Calu3 (cell line): ENCODE measurements at regions of chr14 and their contacts with region 1.

Region 1: DNA sequence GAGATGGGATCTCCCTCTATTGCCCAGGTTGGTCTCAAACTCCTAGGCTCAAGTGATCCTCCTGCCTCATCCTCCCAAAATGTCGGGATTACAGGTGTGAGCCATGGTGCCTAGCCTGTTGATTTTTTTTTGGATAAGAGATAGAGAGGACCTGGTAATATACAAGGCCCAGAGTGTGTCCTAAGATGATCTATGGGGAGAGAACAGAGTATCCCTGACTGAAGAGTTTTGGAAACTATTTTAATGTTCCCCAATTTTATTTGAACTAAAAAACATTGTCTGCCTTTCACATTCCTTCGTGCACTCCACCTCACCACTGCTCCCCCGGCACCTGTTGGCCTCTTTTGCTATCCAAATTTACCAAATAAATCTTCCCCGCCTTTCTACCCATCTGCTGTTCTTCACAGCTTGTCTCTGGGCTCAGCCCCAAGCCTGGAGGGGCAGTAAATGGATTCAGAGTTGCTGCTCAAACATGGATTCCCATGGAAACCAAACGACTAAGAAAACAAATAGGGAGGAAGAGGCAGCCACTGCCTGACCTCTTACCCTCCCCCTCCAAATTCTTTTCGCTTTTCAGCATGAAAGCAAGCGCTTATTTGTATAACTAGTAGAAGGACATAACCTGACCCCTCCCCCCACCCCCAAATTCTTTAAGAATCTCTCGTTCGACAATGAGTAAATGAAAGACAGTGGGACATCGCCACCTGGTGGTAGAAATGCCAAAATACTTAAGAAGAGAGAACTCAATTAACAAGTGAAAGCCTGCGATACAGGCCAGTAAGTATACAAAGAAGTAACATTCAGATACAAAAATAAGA is 22.6 kb downstream of the OR10G3 start:
- DNase-seq: peak; percentile 74
- H3K4me3 Mint-ChIP-seq: no peak overlapping the region
- H3K27ac Mint-ChIP-seq: peak overlapping the region; percentile 14
- H3K4me1 Mint-ChIP-seq: peaks cover 8% of the 10 kb centered on the region
- H3K27me3 Mint-ChIP-seq: no peaks in the 10 kb centered on the region
- CTCF ChIP-seq: peak; percentile 54

Region 2: DNA sequence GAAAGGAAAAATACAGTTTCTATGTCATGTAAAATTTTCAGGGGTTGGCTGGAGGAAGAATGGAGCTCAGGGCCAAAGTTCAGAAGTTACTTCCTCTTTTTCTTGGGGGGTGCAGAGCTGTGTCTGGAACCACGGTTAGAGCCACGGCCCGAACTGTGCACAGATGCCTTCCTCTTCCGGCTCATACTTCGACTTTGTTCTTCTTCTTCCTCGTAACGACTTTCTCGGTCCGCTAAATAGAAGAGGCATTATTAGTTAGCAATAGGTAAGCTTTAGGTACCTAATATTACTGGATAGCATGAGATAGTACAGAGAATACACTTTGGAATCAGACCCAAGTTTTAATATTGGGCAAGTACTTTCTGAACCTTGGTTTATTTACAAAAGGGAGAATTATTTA is 204.7 kb before region 1 on chr14:
- CTCF ChIA-PET with region 1: no interaction called
- intact Hi-C with region 1: no loop called
- DNase-seq: no peak
- H3K4me3 Mint-ChIP-seq: no peak overlapping the region
- H3K27ac Mint-ChIP-seq: no peak overlapping the region
- H3K4me1 Mint-ChIP-seq: no peaks in the 10 kb centered on the region
- H3K27me3 Mint-ChIP-seq: no peaks in the 10 kb centered on the region
- CTCF ChIP-seq: no peak

Region 3: DNA sequence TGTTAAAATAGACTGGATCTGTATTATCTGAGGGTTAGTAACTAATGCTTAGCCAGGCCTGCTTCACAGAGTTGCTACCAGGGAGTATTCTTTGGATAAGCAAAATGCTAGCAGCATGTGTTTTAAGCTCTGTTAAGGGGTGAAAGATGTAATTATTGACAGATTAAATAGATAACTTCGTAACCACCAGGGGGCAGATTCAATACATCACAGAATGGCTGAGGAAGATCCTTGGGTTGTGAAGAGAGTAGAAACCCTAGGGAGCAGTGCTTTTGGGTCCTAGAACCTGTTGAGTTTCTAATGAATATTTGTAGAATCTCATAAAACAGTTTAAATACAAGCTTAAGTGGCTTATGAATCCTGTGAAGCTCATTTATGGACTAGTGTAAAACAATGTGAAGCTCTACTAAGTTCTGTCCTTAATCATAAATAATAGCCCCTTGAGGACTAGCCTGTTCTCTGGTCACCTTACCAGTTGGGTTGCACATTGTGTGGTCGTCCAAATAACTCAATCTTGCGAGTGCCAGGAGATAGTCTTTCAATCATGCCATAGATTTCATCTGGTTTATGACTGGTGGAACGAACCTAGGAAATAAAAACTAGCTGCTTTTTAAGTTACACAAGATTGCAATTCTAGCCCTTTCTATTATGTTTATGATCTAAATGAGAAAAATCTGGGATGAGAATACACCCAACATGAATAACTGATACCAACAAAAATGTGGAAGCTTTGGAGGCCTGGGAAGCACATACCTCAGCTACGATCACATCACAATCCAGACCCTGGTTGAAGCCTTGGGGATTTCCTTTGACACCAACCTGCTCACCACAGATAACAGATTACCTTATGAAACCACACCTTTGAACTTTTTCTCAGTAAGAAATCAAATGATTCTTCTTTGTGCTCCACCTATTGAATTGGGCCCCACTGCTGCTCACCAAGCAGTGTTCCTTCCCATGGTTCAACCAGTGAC is 58.5 kb before region 1 on chr14:
- CTCF ChIA-PET with region 1: interaction called, 11 read pairs
- intact Hi-C with region 1: loop called (anchors 1 kb)
- DNase-seq: peak; percentile 40
- H3K4me3 Mint-ChIP-seq: no peak overlapping the region
- H3K27ac Mint-ChIP-seq: no peak overlapping the region
- H3K4me1 Mint-ChIP-seq: no peaks in the 10 kb centered on the region
- H3K27me3 Mint-ChIP-seq: no peaks in the 10 kb centered on the region
- CTCF ChIP-seq: peak; percentile 43

Region 4: DNA sequence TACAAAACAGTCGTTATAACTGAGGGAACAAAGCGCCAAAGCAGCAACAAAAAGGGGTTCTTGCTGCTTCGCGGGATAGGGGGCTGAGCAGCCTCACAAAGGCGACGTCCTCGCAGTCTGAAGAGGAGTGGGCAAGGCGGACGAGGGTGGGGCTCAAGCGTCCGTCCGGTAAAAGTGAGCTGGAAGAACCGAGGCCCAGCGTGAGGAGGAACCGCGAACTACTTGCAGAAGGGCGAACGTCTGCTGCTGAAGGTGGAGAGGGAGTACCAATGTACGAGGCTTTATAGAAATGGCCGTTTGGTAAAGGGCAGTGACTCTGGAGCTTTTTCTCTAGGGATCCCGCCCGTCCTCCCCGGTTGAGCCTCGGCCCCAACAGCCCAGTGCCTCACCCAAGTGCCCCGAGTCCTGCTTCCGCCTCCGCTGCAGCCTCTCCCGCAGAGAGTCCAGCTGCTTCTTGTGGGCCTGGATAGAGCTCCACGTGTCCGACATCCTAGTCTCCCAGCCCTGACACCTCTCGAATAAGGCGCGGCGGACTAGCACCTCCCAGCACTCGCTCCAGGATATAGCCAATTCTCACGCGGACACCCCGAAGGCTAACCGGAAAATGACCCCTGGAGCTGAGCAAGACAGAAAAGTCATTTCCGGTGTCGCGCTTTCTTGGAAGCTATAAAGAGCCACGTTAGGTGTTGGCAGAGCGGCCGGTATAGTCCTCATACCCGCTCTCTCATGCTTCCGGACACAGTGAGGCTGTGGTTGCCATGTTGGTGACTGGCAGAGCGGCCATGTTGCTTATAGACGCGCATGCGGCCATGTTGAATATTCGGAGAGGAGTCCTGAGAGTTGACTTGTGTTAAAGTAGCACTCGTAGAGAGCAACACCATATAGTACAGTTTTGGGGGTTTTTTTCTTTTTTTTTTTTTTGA is 46.3 kb before region 1 on chr14 and contains the start of gene METTL3:
- CTCF ChIA-PET with region 1: no interaction called
- intact Hi-C with region 1: loop called (anchors 5 kb)
- DNase-seq: peak; percentile 92
- H3K4me3 Mint-ChIP-seq: peak within 1 kb of the TSS; percentile 99
- H3K27ac Mint-ChIP-seq: peak within 1 kb of the TSS; percentile 96
- H3K4me1 Mint-ChIP-seq: peaks cover 21% of the 10 kb centered on the region
- H3K27me3 Mint-ChIP-seq: no peaks in the 10 kb centered on the region
- CTCF ChIP-seq: no peak
- total RNA-seq, gene METTL3: 40.5 and 42.2 TPM in 2 replicates

Region 5: GRCh38 chr14:21521501-21521900 is 35.8 kb before region 1 on chr14:
- CTCF ChIA-PET with region 1: interaction called, 10 read pairs
- intact Hi-C with region 1: no loop called
- DNase-seq: no peak
- H3K4me3 Mint-ChIP-seq: no peak overlapping the region
- H3K27ac Mint-ChIP-seq: no peak overlapping the region
- H3K4me1 Mint-ChIP-seq: no peaks in the 10 kb centered on the region
- H3K27me3 Mint-ChIP-seq: peaks cover 37% of the 10 kb centered on the region
- CTCF ChIP-seq: no peak

Region 6: GRCh38 chr14:21572604-21573003 is 15.3 kb after region 1 on chr14:
- CTCF ChIA-PET with region 1: no interaction called
- intact Hi-C with region 1: no loop called
- DNase-seq: no peak
- H3K4me3 Mint-ChIP-seq: no peak overlapping the region
- H3K27ac Mint-ChIP-seq: no peak overlapping the region
- H3K4me1 Mint-ChIP-seq: no peaks in the 10 kb centered on the region
- H3K27me3 Mint-ChIP-seq: peaks cover 31% of the 10 kb centered on the region
- CTCF ChIP-seq: no peak